ENCODE measurements at regions of chr13 and their contacts with region 1.

Region 1: GRCh38 chr13:30792285-30793000 is 57.1 kb downstream of the ALOX5AP start:
- DNase-seq: peak; percentile 89 to 93
- H3K4me3 ChIP-seq: no peak overlapping the region
- H3K27ac ChIP-seq: peak overlapping the region; percentile 47 to 62 (median 50)
- H3K4me1 ChIP-seq: peaks cover 30 to 45% of the 10 kb centered on the region in 2 donors
- H3K27me3 ChIP-seq: no peaks in the 10 kb centered on the region
- CTCF ChIP-seq: peak in 4 of 6 experiments; percentile 10 to 37 (median 29)
- POLR2A ChIP-seq: no peak

Region 2: GRCh38 chr13:30132623-30133553 is 659.6 kb before region 1 on chr13:
- intact Hi-C with region 1: loop called (anchors 10 kb)
- DNase-seq: peak; percentile 99 to 100
- H3K4me3 ChIP-seq: no peak overlapping the region
- H3K27ac ChIP-seq: no peak overlapping the region
- H3K4me1 ChIP-seq: peaks cover under 1 to 20% of the 10 kb centered on the region in 2 donors
- H3K27me3 ChIP-seq: no peaks in the 10 kb centered on the region
- CTCF ChIP-seq: peak; percentile 79 to 94 (median 91)
- POLR2A ChIP-seq: no peak

Region 3: GRCh38 chr13:30395192-30396084 is 397.0 kb before region 1 on chr13:
- intact Hi-C with region 1: loop called (anchors 10 kb)
- DNase-seq: peak; percentile 91 to 92
- H3K4me3 ChIP-seq: peak overlapping the region; percentile 3 to 45 (median 14)
- H3K27ac ChIP-seq: peak overlapping the region; percentile 57 to 90 (median 89)
- H3K4me1 ChIP-seq: no peaks in the 10 kb centered on the region
- H3K27me3 ChIP-seq: no peaks in the 10 kb centered on the region
- CTCF ChIP-seq: no peak
- POLR2A ChIP-seq: peak in 1 of 2 donors; percentile 69

Region 4: DNA sequence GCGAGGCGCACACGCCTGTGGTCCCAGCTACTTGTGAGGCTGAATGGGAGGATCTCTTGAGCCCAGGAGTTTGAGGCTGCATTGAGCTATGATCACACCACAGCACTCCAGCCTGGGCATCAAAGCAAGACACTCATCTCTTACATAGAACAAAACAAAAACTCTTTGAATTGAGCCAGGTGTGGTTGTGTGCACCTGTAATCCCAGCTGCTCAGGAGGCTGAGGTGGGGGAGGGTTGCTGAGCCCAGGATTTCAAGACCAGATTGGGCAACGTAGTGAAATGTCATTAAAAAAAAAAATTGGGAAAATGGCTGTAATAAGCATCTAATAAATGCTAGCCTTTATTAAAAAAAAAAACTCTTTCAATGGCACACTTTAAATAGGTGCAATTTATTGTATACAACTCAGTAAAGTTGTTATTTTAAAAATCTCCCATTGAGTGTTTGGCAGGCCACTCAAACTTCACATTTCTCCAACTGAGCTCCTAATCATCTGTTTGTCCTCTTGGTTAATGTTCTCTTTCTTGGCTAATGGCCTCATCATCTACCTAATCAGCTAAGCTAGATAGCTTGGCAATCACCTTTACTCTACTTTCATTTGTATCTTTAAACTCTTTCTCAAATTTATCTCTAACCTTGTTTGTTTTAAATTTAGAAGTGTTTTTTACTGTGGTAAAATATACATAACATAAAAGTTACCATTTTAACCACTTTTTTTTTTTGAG is 298.6 kb before region 1 on chr13:
- intact Hi-C with region 1: no loop called
- DNase-seq: no peak
- H3K4me3 ChIP-seq: no peak overlapping the region
- H3K27ac ChIP-seq: no peak overlapping the region
- H3K4me1 ChIP-seq: no peaks in the 10 kb centered on the region
- H3K27me3 ChIP-seq: no peaks in the 10 kb centered on the region
- CTCF ChIP-seq: no peak
- POLR2A ChIP-seq: no peak

Region 5: GRCh38 chr13:30905932-30906383 is 113.5 kb after region 1 on chr13 and contains the start of gene MEDAG:
- intact Hi-C with region 1: no loop called
- DNase-seq: peak; percentile 42 to 48
- H3K4me3 ChIP-seq: peak within 1 kb of the TSS in 2 of 3 donors; percentile 7 to 41
- H3K27ac ChIP-seq: peak within 1 kb of the TSS; percentile 55 to 81 (median 73)
- H3K4me1 ChIP-seq: peaks cover 16 to 35% of the 10 kb centered on the region in 2 donors
- H3K27me3 ChIP-seq: no peaks in the 10 kb centered on the region
- CTCF ChIP-seq: no peak
- POLR2A ChIP-seq: no peak
- total RNA-seq, gene MEDAG: 15.2 to 99.7 (median 46.0) TPM

Region 6: GRCh38 chr13:30963791-30964190 is 171.3 kb after region 1 on chr13:
- intact Hi-C with region 1: no loop called
- DNase-seq: peak; percentile 31 to 47
- H3K4me3 ChIP-seq: no peak overlapping the region
- H3K27ac ChIP-seq: no peak overlapping the region
- H3K4me1 ChIP-seq: no peaks in the 10 kb centered on the region
- H3K27me3 ChIP-seq: no peaks in the 10 kb centered on the region
- CTCF ChIP-seq: no peak
- POLR2A ChIP-seq: no peak

Region 7: GRCh38 chr13:31046711-31047279 is 254.4 kb after region 1 on chr13:
- intact Hi-C with region 1: no loop called
- DNase-seq: peak; percentile 43 to 47
- H3K4me3 ChIP-seq: no peak overlapping the region
- H3K27ac ChIP-seq: peak overlapping the region in 1 of 3 donors; percentile 86
- H3K4me1 ChIP-seq: peaks cover 19 to 25% of the 10 kb centered on the region in 2 donors
- H3K27me3 ChIP-seq: no peaks in the 10 kb centered on the region
- CTCF ChIP-seq: no peak
- POLR2A ChIP-seq: no peak